PC-3 (cell line): ENCODE measurements at regions of chr17 and their contacts with region 1.

Region 1: DNA sequence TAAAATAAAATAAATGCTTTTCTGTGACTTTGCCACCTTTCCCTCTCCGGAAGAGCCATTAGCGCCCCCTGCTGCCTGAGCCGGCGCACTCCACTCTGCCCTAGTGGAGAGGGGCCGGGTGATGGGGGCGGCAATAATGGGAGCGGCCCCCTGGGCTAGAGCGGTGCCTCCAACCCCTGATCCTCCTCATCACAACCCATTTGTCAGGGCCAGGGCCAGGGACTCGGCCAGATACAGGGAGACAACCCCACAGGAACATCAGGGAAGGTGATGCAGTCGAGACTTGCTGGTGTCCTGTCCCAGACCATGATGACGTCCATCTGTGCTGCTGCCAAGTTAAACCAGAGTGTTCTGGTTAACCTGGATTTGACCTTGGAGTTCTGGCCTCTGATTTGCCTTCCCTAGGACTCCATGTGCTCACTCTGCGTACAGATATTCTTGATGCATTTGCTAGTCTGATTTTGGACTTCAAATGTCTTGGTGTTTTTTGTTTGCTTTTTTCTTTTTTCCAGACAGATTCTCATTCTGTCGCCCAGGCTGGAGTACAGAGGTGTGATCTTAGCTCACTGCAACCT is 46.1 kb upstream of the BPTF start:
- DNase-seq: peak; percentile 64
- ATAC-seq: peak; percentile 78
- H3K4me3 ChIP-seq: no peak overlapping the region
- H3K27ac ChIP-seq: no peak overlapping the region
- H3K4me1 ChIP-seq: peaks cover 7% of the 10 kb centered on the region
- H3K27me3 ChIP-seq: no peaks in the 10 kb centered on the region
- CTCF ChIP-seq: peak; percentile 78

Region 2: DNA sequence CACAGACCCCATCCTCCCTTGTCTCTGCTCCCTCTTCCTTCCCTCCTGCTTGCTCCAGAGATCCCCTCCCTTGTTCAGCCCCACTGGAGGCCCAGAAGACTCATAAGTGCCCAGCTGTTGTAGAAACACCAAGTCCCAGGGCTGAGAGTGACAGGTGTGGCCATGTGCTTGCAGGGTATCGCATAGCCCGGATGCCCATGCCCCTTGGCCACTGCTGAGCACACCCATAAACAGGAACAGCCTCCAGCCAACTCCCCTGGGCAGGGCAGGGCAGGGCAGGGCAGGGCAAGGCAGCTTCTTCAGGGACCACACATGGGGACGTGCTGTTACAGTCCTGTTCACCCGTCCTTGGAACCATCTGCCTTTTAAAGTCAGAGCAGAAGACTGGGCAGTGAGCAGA is 732.8 kb before region 1 on chr17:
- CTCF ChIA-PET with region 1: no interaction called
- POLR2A ChIA-PET with region 1: interaction called, 11 read pairs
- intact Hi-C with region 1: no loop called
- DNase-seq: no peak
- ATAC-seq: peak; percentile 75
- H3K4me3 ChIP-seq: no peak overlapping the region
- H3K27ac ChIP-seq: no peak overlapping the region
- H3K4me1 ChIP-seq: 0 out of 2 replicates have a peak, but pooled peaks cover 7% of the 10 kb centered on the region
- H3K27me3 ChIP-seq: no peaks in the 10 kb centered on the region
- CTCF ChIP-seq: no peak

Region 3: GRCh38 chr17:67481808-67482207 is 297.4 kb before region 1 on chr17:
- CTCF ChIA-PET with region 1: no interaction called
- POLR2A ChIA-PET with region 1: interaction called, 27 read pairs
- intact Hi-C with region 1: no loop called
- DNase-seq: peak; percentile 81
- ATAC-seq: peak; percentile 75
- H3K4me3 ChIP-seq: no peak overlapping the region
- H3K27ac ChIP-seq: peak overlapping the region; percentile 86
- H3K4me1 ChIP-seq: peaks cover 40% of the 10 kb centered on the region
- H3K27me3 ChIP-seq: no peaks in the 10 kb centered on the region
- CTCF ChIP-seq: no peak

Region 4: DNA sequence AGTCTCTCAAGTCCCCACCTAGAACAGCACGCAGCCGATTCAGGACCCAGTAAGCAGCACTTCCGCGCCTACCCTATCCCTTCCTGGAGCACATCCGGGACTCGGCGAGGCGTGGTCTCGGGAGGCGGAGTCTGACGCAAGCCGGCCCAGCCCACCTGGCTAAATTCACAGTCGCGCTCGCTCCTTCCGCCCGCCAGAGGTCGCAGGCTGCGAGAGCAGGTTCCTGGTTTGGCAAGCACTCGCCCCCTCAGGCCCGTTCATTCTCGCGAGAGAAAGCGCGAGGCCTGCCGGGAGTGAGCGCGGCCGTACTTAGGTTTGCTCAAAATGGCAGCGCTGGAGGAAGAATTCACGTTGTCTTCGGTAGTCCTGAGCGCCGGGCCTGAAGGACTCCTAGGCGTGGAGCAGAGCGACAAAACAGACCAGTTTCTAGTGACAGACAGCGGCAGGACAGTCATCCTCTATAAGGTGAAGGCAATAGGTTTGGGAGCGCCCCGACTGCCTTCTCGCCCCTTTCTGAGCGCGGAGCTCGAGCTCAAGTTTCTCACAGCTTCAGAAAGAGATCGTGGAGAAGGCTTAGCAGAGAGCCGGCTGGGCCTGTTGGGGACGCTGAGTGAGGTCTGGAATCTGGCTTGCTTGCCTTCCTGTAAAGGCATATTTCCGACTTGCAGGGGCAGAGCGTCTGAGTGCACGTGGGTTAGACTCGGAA is 61.4 kb before region 1 on chr17 and contains the start of gene NOL11:
- CTCF ChIA-PET with region 1: no interaction called
- POLR2A ChIA-PET with region 1: no interaction called
- intact Hi-C with region 1: loop called (anchors 1 kb)
- DNase-seq: peak; percentile 100
- ATAC-seq: peak; percentile 97
- H3K4me3 ChIP-seq: peak within 1 kb of the TSS; percentile 93
- H3K27ac ChIP-seq: peak within 1 kb of the TSS; percentile 79
- H3K4me1 ChIP-seq: peaks cover 22% of the 10 kb centered on the region
- H3K27me3 ChIP-seq: no peaks in the 10 kb centered on the region
- CTCF ChIP-seq: peak; percentile 94
- total RNA-seq, gene NOL11: 80.5 and 96.9 TPM in 2 replicates

Region 5: DNA sequence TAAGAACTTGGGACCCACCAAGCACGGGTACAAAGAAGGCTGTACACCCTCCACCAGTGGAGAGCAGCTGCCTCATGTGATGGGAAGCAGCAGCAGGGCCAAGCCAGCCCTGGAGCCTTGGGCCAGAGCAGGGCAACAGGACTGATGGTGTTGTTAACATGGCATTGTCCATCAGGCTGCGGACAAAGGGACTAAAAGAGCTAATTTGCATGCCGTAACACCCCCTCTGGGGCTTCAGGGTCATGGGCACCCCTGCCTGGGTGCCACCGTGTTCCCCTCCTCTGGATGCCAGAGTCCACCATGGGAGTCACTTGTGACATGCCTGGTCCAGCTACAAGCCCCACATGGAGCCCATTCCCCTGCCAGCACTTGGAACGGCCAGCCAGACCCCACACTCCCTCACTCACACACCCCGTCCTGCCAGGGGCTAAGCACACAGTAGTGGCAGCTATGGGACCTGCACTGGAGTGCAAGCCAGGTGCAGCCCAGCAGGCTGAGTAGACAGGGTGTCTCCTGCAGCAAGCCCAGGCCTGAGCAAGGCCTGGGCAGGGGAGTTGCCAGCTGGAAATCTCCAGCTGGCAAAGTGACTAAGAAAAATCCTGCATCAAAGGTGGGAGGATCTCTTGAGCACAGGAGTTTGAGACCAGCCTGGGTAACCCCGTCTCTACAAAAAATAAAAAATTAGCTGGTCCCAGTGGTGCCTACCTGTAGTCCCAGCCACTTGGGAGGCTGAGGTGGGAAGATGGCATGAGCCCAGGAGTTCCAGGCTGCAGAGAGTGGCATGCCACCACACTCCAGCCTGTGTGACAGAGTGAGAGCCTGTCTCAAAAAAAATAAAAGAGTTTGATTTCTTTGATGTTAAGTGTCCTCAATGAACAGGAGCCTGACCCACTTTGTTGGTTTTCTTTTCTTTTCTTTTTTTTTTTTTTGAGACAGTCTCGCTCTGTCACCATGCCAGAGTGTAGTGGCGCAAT is 27.8 kb before region 1 on chr17:
- CTCF ChIA-PET with region 1: interaction called, 3 read pairs
- POLR2A ChIA-PET with region 1: interaction called, 11 read pairs
- intact Hi-C with region 1: no loop called
- DNase-seq: no peak
- ATAC-seq: peak; percentile 31; the same call in 1 of the 2 replicates
- H3K4me3 ChIP-seq: no peak overlapping the region
- H3K27ac ChIP-seq: no peak overlapping the region
- H3K4me1 ChIP-seq: no peaks in the 10 kb centered on the region
- H3K27me3 ChIP-seq: no peaks in the 10 kb centered on the region
- CTCF ChIP-seq: no peak

Region 6: GRCh38 chr17:67824735-67825626 is 45.8 kb after region 1 on chr17 and contains the start of gene BPTF:
- CTCF ChIA-PET with region 1: no interaction called
- POLR2A ChIA-PET with region 1: interaction called, 14 read pairs
- intact Hi-C with region 1: no loop called
- DNase-seq: peak; percentile 98
- ATAC-seq: peak; percentile 90
- H3K4me3 ChIP-seq: peak within 1 kb of the TSS; percentile 90
- H3K27ac ChIP-seq: peak within 1 kb of the TSS; percentile 81
- H3K4me1 ChIP-seq: peaks cover 25% of the 10 kb centered on the region
- H3K27me3 ChIP-seq: no peaks in the 10 kb centered on the region
- CTCF ChIP-seq: peak; percentile 89
- total RNA-seq, gene BPTF: 53.8 and 61.8 TPM in 2 replicates